Left cardiac atrium (tissue), 4 donors: ENCODE measurements at regions of chr3 and their contacts with region 1.

Region 1: GRCh38 chr3:100057716-100058575 is 56.4 kb downstream of the FILIP1L start:
- DNase-seq: no peak
- ATAC-seq: peak; percentile 38 to 53

Region 2: DNA sequence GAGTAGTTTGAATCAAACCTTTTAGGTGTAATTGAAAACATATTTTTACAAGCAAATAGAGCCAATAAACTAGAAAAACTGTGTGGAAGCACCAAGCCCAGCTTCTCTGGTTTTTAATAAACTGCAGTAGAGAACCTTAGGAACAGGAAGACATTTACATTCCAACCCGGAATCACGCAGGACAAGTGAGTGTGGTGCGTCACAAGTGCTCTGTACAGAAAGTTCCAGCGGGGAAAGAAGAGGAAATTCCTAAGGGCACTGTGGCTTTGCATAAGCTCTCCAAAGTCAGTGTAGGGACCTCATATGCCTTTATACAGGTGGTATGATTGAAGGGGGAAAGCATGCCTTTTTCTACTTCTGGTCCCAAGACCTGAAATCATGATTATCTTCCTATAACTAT is 398.0 kb before region 1 on chr3:
- intact Hi-C with region 1: no loop called
- DNase-seq: no peak
- ATAC-seq: peak in 1 of 2 donors; percentile 7

Region 3: DNA sequence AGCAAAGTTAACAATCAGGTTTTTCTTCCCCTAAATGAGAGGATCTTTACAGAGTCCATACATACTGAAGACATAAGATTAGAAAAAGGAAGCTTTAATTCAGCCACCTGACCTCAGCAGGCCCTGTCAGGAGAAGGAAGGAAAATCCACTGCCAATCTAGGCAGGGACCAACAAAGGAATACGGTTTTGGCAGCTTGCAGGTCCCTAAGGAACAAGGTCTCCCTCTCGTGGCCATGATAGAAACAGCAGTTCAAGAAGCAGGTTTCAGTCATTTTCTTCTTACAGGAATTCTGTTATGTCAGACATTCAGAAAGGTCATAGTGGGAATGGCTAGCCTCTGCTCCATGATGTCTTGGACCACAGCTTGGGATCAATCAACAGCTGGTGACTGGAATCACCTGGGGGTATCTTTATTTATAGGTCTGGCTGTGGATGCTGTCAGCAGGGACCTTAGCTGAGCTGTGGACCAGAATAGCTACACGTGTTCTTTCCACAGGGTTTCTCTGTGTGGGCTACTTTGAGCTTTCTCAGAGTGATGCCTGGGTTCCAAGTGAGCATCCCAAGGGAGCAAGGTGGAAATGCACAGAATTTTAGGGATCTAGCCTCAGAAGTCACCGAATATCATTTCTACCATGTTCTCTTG is 249.7 kb before region 1 on chr3:
- intact Hi-C with region 1: no loop called
- DNase-seq: no peak
- ATAC-seq: peak in 1 of 2 donors; percentile 36

Region 4: GRCh38 chr3:99842826-99843589 is 214.9 kb before region 1 on chr3:
- intact Hi-C with region 1: loop called in 1 of 2 experiments (anchors 5 kb)
- DNase-seq: no peak
- ATAC-seq: peak; percentile 68 to 78

Region 5: GRCh38 chr3:99981138-99981537 is 76.8 kb before region 1 on chr3:
- intact Hi-C with region 1: loop called in 1 of 2 experiments (anchors 2 kb)
- DNase-seq: no peak
- ATAC-seq: no peak

Region 6: GRCh38 chr3:100103558-100104441 is 45.9 kb after region 1 on chr3:
- intact Hi-C with region 1: no loop called
- DNase-seq: no peak
- ATAC-seq: peak in 1 of 2 donors; percentile 26

Region 7: GRCh38 chr3:100400780-100401673 is 343.1 kb after region 1 on chr3 and contains the starts of genes LNP1 and TOMM70:
- intact Hi-C with region 1: no loop called
- DNase-seq: peak; percentile 99
- ATAC-seq: peak; percentile 96 to 98
- total RNA-seq, gene LNP1: 2.8 to 3.1 TPM
- total RNA-seq, gene TOMM70: 50.0 to 53.4 TPM